Activated naive CD4-positive, alpha-beta T cell treated with anti-CD3 and anti-CD28 coated beads for 36 hours (primary cell): ENCODE measurements at regions of chr17 and their contacts with region 1.

Region 1: DNA sequence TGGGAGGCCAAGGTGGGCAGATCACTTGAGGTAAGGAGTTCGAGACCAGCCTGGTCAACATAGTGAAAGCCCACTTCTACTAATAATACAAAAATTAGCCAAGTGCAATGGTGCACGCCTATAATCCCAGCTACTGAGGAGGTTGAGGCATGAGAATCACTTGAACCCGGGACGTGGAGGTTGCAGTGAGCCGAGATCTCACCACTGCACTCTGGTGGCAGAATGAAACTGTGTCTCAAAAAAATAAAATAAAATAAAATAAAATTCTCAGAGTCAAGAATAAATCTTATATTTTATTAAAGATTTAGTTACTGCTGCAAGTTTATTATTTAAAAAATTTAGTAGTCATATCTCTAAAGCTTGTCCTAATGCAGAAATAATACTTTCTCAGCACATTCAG is 29.7 kb downstream of the ARL4D start:
- DNase-seq: no peak
- H3K4me3 Mint-ChIP-seq: no peak overlapping the region
- H3K27ac Mint-ChIP-seq: no peak overlapping the region
- H3K4me1 Mint-ChIP-seq: no peaks in the 10 kb centered on the region
- H3K27me3 Mint-ChIP-seq: peaks cover 14% of the 10 kb centered on the region

Region 2: DNA sequence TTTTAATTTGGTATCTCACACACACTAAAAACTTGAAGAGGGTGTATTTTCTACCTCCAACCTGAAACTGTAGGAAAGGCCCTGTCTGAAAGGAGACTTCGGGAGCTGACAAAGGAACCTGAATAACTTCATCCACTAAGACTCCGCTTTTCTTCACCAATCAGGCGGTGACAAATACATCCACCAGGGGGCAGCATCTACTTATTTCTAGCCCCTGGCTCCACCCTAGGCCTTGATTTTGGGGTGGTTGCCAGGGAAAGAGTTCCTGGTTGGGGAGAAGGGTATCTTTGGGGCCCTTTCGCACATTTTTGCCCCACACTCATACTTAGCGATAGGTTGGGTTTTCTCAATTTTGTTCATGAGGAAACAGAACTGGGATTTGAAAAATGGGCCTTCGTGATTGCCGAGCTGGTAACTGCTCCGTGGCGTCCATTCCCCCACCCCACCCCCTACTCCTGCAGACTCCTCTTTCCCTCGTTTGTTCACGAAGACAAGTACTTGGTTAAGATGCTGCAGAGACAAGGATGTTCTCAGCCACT is 34.5 kb before region 1 on chr17:
- CTCF ChIA-PET with region 1: interaction called, 5 read pairs
- intact Hi-C with region 1: loop called (anchors 1 kb)
- DNase-seq: peak; percentile 97
- H3K4me3 Mint-ChIP-seq: no peak overlapping the region
- H3K27ac Mint-ChIP-seq: peak overlapping the region; percentile 3
- H3K4me1 Mint-ChIP-seq: peaks cover 20% of the 10 kb centered on the region
- H3K27me3 Mint-ChIP-seq: no peaks in the 10 kb centered on the region

Region 3: DNA sequence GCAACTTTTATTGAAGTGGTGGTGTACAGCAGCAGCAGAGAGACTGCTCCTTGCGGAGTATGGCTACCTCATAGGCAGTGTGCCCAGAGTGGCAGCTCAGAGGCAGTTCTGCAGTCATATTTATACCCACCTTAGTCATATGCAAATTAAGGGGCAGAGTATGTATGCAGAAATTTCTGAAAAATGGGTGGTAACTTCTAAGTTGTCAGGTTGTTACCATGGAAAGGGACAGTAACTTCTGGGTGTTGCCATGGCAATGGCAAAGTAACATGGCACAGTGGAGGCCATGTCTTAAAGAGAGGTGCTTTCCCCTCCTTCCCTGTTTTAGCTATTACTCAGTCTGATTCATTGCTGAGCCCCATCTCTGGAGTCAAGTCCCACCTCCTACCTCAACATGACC is 179.8 kb after region 1 on chr17:
- CTCF ChIA-PET with region 1: no interaction called
- intact Hi-C with region 1: no loop called
- DNase-seq: peak; percentile 88
- H3K4me3 Mint-ChIP-seq: no peak overlapping the region
- H3K27ac Mint-ChIP-seq: peak overlapping the region; percentile 70
- H3K4me1 Mint-ChIP-seq: peaks cover 9% of the 10 kb centered on the region
- H3K27me3 Mint-ChIP-seq: peaks cover 7% of the 10 kb centered on the region